ENCODE measurements at regions of chr17 and their contacts with region 1.

Region 1: GRCh38 chr17:48593840-48594537 is 410 bp upstream of the HOXB5 start:
- DNase-seq: no peak

Region 2: DNA sequence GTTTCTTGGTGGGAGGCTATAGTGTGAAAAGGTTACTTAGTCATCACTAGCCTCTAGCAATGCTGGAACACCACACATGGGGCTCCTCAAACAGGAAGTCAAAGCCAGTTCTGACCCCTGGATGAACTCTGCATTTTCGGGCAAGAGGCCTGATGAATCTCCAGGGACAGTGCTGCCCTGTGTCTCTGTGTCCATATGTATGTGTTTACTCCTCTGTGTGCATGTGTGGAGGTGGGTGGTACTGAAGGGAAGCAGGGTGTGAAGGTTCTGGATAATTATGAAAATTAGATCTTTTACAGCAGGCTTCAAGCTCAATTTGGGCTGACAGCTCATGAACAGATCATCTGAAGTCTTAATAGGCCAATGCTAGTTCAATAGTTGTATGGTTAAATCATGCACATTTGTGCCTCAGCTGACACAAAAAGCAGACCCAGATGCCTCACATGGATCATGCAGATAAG is 352.8 kb before region 1 on chr17:
- intact Hi-C with region 1: loop called (anchors 10 kb)
- DNase-seq: no peak

Region 3: GRCh38 chr17:48335858-48336500 is 258.0 kb before region 1 on chr17:
- intact Hi-C with region 1: loop called (anchors 5 kb)
- DNase-seq: no peak

Measured in cardiac septum (tissue), 1 donor.